Activated T-helper 2 cell treated with anti-CD3 and anti-CD28 coated beads, Interferon-gamma antibody, Interleukin-2, Interleukin-4, amounts not matched to agents 10 μg/mL and 5 μg/mL and 100 μg/mL, durations not matched to agents 14 hours and 24 hours and 36 hours (primary cell): ENCODE measurements at regions of chr15 and their contacts with region 1.

Region 1: DNA sequence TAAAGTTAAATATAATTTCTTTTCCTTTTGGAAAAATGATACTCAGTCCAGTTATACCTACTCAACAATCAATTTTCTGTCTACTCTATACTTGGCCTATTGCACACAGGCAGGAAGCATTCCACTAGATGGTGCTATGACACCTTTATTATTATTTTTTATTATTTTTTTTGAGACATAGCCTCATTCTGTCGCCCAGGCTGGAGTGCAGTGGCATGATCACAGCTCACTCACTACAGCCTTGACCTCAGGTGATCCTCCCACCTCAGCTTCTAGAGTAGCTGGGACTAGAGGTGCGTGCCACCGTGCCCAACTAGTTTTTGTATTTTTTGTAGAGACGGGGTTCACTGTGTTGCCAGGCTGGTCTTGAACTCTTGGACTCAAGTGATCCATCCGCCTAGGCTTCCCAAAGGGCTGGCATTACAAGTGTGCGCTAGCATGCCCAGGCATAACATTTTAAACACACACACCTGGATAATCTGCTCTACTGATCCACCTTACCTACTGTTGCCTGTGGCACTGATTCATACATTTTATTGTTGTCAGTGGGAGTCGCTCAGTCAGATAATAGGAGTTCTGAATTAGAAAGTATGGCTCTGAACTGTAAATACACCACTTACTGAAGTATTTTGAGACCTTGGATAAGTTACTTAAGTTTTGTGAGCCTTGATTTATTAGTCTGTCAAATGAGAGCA is 56.2 kb downstream of the EIF3J start:
- DNase-seq: no peak
- H3K4me3 Mint-ChIP-seq: no peak overlapping the region
- H3K27ac Mint-ChIP-seq: peak overlapping the region; percentile 46
- H3K4me1 Mint-ChIP-seq: peaks cover 17% of the 10 kb centered on the region
- H3K27me3 Mint-ChIP-seq: no peaks in the 10 kb centered on the region

Region 2: DNA sequence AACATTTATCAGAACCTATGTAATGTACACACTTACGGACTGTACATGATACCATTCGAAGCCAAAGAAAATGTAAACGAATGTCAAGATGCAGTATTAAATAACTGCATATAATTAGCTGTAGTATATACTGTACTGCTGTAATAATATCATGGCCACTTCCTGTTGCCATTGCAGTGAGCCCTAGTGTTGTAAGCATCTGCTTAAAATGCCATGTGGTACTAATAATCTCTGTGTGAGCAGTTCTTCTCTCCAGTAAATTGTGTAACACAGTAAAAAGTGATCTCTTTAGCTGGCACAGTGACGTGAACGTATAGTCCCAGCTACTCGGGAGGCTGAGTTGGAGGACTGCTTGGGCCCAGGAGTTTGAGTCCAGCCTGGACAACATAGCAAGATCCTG is 61.7 kb after region 1 on chr15:
- intact Hi-C with region 1: loop called (anchors 10 kb)
- DNase-seq: no peak
- H3K4me3 Mint-ChIP-seq: no peak overlapping the region
- H3K27ac Mint-ChIP-seq: no peak overlapping the region
- H3K4me1 Mint-ChIP-seq: peaks cover 17% of the 10 kb centered on the region
- H3K27me3 Mint-ChIP-seq: no peaks in the 10 kb centered on the region

Region 3: GRCh38 chr15:44861439-44861910 is 268.3 kb after region 1 on chr15:
- intact Hi-C with region 1: loop called (anchors 10 kb)
- DNase-seq: no peak
- H3K4me3 Mint-ChIP-seq: no peak overlapping the region
- H3K27ac Mint-ChIP-seq: no peak overlapping the region
- H3K4me1 Mint-ChIP-seq: no peaks in the 10 kb centered on the region
- H3K27me3 Mint-ChIP-seq: no peaks in the 10 kb centered on the region